ENCODE measurements at regions of chr3 and their contacts with region 1.

Region 1: DNA sequence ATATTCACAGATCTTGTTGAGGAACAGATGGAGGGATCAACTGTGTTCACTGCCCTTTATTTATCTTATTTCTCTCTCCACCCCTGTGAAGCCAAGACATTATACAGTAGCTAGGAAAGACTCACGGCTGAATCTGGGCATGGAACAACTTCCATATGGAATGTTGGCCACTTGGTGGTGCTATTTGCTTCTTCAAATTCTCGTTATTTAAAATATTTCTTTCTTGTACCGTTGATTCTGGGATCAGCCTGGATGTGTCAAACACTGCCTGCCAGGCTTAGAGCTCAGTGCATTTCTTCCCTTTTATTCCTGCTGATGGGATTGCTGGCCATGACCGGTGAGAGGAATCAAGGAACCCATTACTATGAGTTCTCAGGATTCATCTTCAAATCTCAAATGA is 17.5 kb upstream of the GASK1A start:
- DNase-seq: peak; percentile 55
- H3K4me3 ChIP-seq: no peak overlapping the region
- H3K27ac ChIP-seq: no peak overlapping the region
- H3K4me1 ChIP-seq: no peaks in the 10 kb centered on the region
- H3K27me3 ChIP-seq: peaks cover 3 to 5% of the 10 kb centered on the region in 2 experiments
- CTCF ChIP-seq: peak; percentile 41 to 42
- POLR2A ChIP-seq: no peak

Region 2: GRCh38 chr3:42946050-42946449 is 15.6 kb before region 1 on chr3:
- CTCF ChIA-PET with region 1: interaction called, 10 read pairs
- POLR2A ChIA-PET with region 1: no interaction called
- dilution Hi-C with region 1: no loop called
- intact Hi-C with region 1: no loop called
- DNase-seq: no peak
- H3K4me3 ChIP-seq: no peak overlapping the region
- H3K27ac ChIP-seq: no peak overlapping the region
- H3K4me1 ChIP-seq: no peaks in the 10 kb centered on the region
- H3K27me3 ChIP-seq: peaks cover 0 to 5% of the 10 kb centered on the region in 2 experiments
- CTCF ChIP-seq: no peak
- POLR2A ChIP-seq: no peak

Region 3: DNA sequence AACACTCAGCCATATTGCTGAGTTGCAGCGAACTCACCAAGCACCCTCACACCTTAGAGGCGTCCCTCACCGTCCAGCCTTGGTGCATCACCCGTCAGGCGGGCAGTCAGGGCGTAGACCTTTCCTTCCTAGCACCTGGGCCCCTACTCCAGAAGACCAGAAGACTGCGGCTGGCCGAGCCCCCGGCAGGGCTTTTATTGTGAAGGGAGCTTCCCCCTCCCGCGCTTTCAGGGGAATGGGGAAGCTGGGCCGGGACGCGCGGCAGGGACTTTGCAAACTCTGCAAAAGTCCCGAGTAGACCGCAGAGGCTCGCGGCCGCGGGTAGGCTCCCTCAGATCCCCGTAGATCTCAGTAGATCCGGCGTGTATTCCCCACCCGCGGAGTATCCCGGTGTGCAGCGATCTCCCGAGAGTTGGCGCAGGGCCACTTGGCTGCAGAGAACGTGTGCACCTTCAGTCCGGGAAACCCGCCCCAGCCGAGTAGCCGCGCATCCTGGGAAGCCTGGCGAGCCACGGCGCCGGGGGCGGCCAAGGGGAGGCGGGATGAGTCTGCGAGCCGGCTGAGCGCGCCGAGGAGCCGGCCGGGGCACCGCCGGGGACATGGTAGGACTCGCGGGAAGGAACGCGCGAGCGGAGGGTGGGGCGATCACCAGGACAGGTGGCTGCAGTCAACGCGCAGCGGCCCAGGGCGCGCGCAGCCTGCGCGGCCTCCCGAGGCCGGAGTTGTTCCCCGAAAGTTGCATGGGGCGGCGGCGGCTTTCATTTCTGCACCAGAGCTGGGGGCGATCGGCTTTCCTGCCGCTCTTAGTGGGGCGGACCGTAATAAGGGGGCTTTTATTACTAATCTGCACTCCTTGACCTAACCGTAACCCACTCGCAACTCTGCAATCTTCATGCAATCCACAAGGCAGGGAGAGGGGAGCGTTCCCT is 17.7 kb after region 1 on chr3 and contains the start of gene GASK1A:
- CTCF ChIA-PET with region 1: interaction called, 17 read pairs
- POLR2A ChIA-PET with region 1: no interaction called
- dilution Hi-C with region 1: no loop called
- intact Hi-C with region 1: no loop called
- DNase-seq: no peak
- H3K4me3 ChIP-seq: peak within 1 kb of the TSS in 1 of 3 experiments; percentile 21
- H3K27ac ChIP-seq: no peak within 1 kb of the TSS
- H3K4me1 ChIP-seq: peaks cover 3% of the 10 kb centered on the region
- H3K27me3 ChIP-seq: peaks cover 39 to 44% of the 10 kb centered on the region in 2 experiments
- CTCF ChIP-seq: no peak
- POLR2A ChIP-seq: no peak
- total RNA-seq, gene GASK1A: not detected in 2 replicates

Region 4: DNA sequence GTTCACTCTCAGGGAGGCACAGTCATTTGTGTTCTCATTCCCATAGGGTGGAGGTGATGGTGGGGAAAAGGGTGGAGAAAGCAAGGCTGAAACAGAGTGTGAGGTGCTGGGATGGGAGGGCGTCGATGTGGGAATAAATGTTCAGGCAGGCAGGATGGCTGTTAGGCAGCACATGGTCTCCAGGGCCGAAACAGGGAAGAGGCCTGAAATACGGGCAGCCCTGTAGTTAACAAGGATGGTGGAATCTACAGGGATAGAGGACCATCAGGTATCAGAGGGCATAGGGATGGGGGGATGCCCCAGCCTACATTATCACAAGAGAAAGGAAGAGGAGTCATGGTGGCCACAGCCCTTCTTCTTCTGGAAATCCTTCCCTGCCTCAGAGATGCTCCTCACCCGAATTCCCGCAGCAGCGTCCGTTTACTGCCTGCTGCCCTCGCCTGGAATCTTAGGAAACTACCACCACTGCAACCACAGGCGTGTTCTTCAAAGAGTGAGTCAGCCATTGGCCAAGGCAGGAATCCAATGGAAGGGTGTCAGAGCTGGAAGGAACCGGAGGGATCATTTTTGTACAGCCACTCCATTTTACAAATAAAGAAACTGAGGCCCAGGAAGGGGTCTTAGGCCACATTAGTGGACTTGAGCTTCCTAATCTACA is 194.0 kb after region 1 on chr3:
- CTCF ChIA-PET with region 1: interaction called, 115 read pairs
- POLR2A ChIA-PET with region 1: no interaction called
- dilution Hi-C with region 1: no loop called
- intact Hi-C with region 1: loop called (anchors 1 kb)
- DNase-seq: peak; percentile 68
- H3K4me3 ChIP-seq: no peak overlapping the region
- H3K27ac ChIP-seq: no peak overlapping the region
- H3K4me1 ChIP-seq: no peaks in the 10 kb centered on the region
- H3K27me3 ChIP-seq: peaks cover 15 to 17% of the 10 kb centered on the region in 2 experiments
- CTCF ChIP-seq: peak; percentile 58 to 72
- POLR2A ChIP-seq: no peak

Region 5: GRCh38 chr3:43286115-43286840 is 324.6 kb after region 1 on chr3 and contains the start of gene SNRK:
- CTCF ChIA-PET with region 1: interaction called, 6 read pairs
- POLR2A ChIA-PET with region 1: no interaction called
- dilution Hi-C with region 1: no loop called
- intact Hi-C with region 1: loop called (anchors 10 kb)
- DNase-seq: peak; percentile 99
- H3K4me3 ChIP-seq: peak within 1 kb of the TSS; percentile 60 to 100 (median 99)
- H3K27ac ChIP-seq: peak within 1 kb of the TSS; percentile 100
- H3K4me1 ChIP-seq: peaks cover 43% of the 10 kb centered on the region
- H3K27me3 ChIP-seq: no peaks in the 10 kb centered on the region
- CTCF ChIP-seq: peak; percentile 32 to 42
- POLR2A ChIP-seq: peak; percentile 87
- total RNA-seq, gene SNRK: 99.9 and 108 TPM in 2 replicates

Region 6: DNA sequence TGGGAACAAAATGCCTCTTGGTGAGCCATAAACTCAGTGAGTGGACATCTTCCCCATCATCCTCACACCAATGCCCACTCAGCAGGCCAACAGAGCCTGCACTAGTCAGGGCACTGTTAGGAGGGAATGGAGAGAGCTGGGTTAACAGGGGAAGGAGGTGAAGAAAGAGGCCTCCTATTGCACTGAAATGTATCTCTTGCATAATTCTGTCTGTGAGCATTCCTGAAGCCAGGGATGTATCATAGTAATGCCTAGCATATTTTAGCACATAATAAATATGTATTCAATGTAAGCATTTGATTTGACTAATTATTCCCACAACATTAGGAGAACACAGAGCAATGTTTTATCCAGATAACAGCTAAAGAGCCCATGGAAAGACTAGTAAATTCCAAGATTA is 579.0 kb after region 1 on chr3:
- CTCF ChIA-PET with region 1: interaction called, 4 read pairs
- POLR2A ChIA-PET with region 1: no interaction called
- dilution Hi-C with region 1: no loop called
- intact Hi-C with region 1: loop called (anchors 2 kb)
- DNase-seq: no peak
- H3K4me3 ChIP-seq: no peak overlapping the region
- H3K27ac ChIP-seq: no peak overlapping the region
- H3K4me1 ChIP-seq: peaks cover 3% of the 10 kb centered on the region
- H3K27me3 ChIP-seq: no peaks in the 10 kb centered on the region
- CTCF ChIP-seq: no peak
- POLR2A ChIP-seq: no peak

Region 7: GRCh38 chr3:44114142-44114541 is 1152.5 kb after region 1 on chr3:
- CTCF ChIA-PET with region 1: interaction called, 11 read pairs
- POLR2A ChIA-PET with region 1: no interaction called
- dilution Hi-C with region 1: no loop called
- intact Hi-C with region 1: no loop called
- DNase-seq: peak; percentile 34
- H3K4me3 ChIP-seq: no peak overlapping the region
- H3K27ac ChIP-seq: no peak overlapping the region
- H3K4me1 ChIP-seq: no peaks in the 10 kb centered on the region
- H3K27me3 ChIP-seq: peaks cover 0 to 2% of the 10 kb centered on the region in 2 experiments
- CTCF ChIP-seq: peak; percentile 37 to 79
- POLR2A ChIP-seq: no peak